Cardiac septum (tissue), 1 donor: ENCODE measurements at regions of chr18 and their contacts with region 1.

Region 1: GRCh38 chr18:3948958-3949746 is 499.2 kb downstream of the TGIF1 start:
- DNase-seq: no peak

Region 2: DNA sequence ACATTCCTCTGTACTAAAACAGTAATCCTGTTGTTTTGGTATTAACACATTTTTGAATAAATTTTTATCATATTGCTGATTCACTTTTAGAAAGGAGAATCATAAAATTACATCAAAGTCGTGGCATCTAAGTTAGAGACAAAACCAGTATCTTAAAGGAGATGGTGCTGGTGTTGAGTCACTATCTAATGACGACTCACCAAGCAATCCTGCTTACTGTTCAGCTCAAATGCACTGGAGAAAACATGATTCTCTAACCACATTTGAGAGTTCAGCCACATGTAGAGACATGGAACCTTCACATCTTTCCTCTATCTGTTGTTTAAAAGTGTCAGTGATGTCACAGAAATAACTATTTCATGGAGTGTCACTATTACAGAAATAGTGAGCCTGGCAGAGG is 25.4 kb before region 1 on chr18:
- intact Hi-C with region 1: loop called (anchors 1 kb)
- DNase-seq: no peak